GM12878 (cell line): ENCODE measurements at regions of chr14 and their contacts with region 1.

Region 1: DNA sequence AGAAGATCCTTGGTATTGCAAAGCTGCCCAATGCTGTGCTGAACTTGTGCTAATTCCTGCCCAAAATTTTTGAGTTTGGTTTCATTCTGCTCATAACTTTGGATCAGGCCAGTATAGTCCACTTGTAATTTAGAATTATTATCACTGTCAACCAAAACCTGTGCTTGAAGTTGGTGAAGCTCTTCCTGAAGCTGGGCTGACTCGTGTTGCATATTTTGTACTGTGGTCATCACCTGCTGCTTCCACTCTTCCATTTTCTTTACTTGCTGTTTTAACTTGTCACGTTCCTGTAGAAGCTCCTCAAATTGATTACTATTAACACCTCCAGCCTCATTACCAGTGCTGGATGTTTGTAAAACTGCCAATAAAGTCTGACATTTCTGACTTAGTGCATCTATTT is 35.8 kb downstream of the TRIP11 start:
- DNase-seq: no peak
- ATAC-seq: no peak
- H3K4me3 ChIP-seq: no peak overlapping the region
- H3K27ac ChIP-seq: no peak overlapping the region
- H3K4me1 ChIP-seq: no peaks in the 10 kb centered on the region
- H3K27me3 ChIP-seq: no peaks in the 10 kb centered on the region
- CTCF ChIP-seq: no peak
- EP300 ChIP-seq: no peak
- POLR2A ChIP-seq: no peak
- RAD21 ChIP-seq: no peak

Region 2: GRCh38 chr14:91249841-91250616 is 754.0 kb before region 1 on chr14:
- CTCF ChIA-PET with region 1: no interaction called
- POLR2A ChIA-PET with region 1: no interaction called
- RAD21 ChIA-PET with region 1: no interaction called
- SMC1A ChIA-PET with region 1: no interaction called
- in situ Hi-C with region 1: no loop called
- intact Hi-C with region 1: no loop called
- DNase-seq: peak; percentile 90
- ATAC-seq: peak; percentile 89
- H3K4me3 ChIP-seq: peak overlapping the region; percentile 13; the same call in 1 of the 2 replicates
- H3K27ac ChIP-seq: peak overlapping the region; percentile 67
- H3K4me1 ChIP-seq: peaks cover 39% of the 10 kb centered on the region
- H3K27me3 ChIP-seq: no peaks in the 10 kb centered on the region
- CTCF ChIP-seq: 0 out of 6 replicates have a peak, but pooled peaks of 1 of the 3 experiments have one; percentile 1
- EP300 ChIP-seq: peak; percentile 66 to 69; a peak in 2 of 4 replicates
- POLR2A ChIP-seq: no peak
- RAD21 ChIP-seq: no peak

Region 3: GRCh38 chr14:91836119-91836881 is 167.8 kb before region 1 on chr14:
- CTCF ChIA-PET with region 1: no interaction called
- POLR2A ChIA-PET with region 1: no interaction called
- RAD21 ChIA-PET with region 1: no interaction called
- SMC1A ChIA-PET with region 1: no interaction called
- in situ Hi-C with region 1: no loop called
- intact Hi-C with region 1: loop called (anchors 10 kb)
- DNase-seq: no peak
- ATAC-seq: peak; percentile 90
- H3K4me3 ChIP-seq: peak overlapping the region; percentile 68
- H3K27ac ChIP-seq: no peak overlapping the region
- H3K4me1 ChIP-seq: 0 out of 2 replicates have a peak, but pooled peaks cover 1% of the 10 kb centered on the region
- H3K27me3 ChIP-seq: peaks cover 0 to 6% of the 10 kb centered on the region in 2 experiments; a peak in 3 of 4 replicates
- CTCF ChIP-seq: no peak
- EP300 ChIP-seq: no peak
- POLR2A ChIP-seq: no peak
- RAD21 ChIP-seq: 0 out of 2 replicates have a peak, but pooled peaks have one; percentile 0

Region 4: GRCh38 chr14:91919814-91920213 is 84.2 kb before region 1 on chr14:
- CTCF ChIA-PET with region 1: no interaction called
- POLR2A ChIA-PET with region 1: no interaction called
- RAD21 ChIA-PET with region 1: no interaction called
- SMC1A ChIA-PET with region 1: no interaction called
- in situ Hi-C with region 1: no loop called
- intact Hi-C with region 1: no loop called
- DNase-seq: no peak
- ATAC-seq: no peak
- H3K4me3 ChIP-seq: no peak overlapping the region
- H3K27ac ChIP-seq: no peak overlapping the region
- H3K4me1 ChIP-seq: no peaks in the 10 kb centered on the region
- H3K27me3 ChIP-seq: no peaks in the 10 kb centered on the region; a peak in 1 of 4 replicates
- CTCF ChIP-seq: no peak
- EP300 ChIP-seq: no peak
- POLR2A ChIP-seq: no peak
- RAD21 ChIP-seq: no peak

Region 5: GRCh38 chr14:92026548-92027190 is 22.6 kb after region 1 on chr14:
- CTCF ChIA-PET with region 1: no interaction called
- POLR2A ChIA-PET with region 1: no interaction called
- RAD21 ChIA-PET with region 1: no interaction called
- SMC1A ChIA-PET with region 1: no interaction called
- in situ Hi-C with region 1: no loop called
- intact Hi-C with region 1: no loop called
- DNase-seq: no peak
- ATAC-seq: no peak
- H3K4me3 ChIP-seq: no peak overlapping the region
- H3K27ac ChIP-seq: no peak overlapping the region
- H3K4me1 ChIP-seq: no peaks in the 10 kb centered on the region
- H3K27me3 ChIP-seq: no peaks in the 10 kb centered on the region
- CTCF ChIP-seq: no peak
- EP300 ChIP-seq: no peak
- POLR2A ChIP-seq: no peak
- RAD21 ChIP-seq: no peak